Activated CD4-positive, alpha-beta T cell treated with anti-CD3 and anti-CD28 coated beads, Interleukin-2, amount 10 ng/mL, durations not matched to agents 7 days and 5 days (primary cell): ENCODE measurements at regions of chr22 and their contacts with region 1.

Region 1: DNA sequence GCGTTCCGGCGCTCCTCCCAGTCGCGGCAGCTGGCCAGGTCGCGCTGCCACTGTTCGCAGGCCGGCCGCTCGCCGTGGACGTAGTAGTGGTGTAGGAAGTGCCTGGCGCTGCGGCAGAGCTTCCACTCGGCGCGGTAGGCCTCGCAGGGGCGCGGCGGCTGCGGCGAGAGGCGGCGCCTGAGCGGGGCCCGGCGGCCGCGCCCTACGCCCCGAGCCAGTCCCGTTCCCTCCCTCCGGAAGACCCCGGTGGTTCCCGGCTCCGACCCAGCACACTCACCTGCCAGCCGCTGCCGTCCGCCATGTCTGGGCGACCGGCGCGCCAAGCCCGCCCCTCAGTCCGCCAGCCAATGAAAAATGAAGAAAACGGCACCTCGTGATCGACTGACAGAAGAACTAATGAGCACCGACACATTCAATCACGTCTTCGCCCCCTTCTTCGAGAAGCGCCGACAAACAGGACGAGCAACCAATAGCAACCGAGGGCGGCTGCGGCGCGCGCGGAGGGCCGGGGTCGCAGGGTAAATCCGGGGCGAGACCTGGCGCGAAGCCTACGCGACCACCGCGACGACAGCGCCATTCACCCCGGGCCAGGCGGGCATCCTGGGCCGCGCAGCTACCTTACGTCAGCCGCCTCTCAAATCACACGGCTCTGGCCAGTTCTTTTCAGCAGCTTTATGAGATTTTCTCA is at the start of gene C22orf39:
- DNase-seq: peak; percentile 92
- H3K4me3 Mint-ChIP-seq: peak within 1 kb of the TSS; percentile 94
- H3K27ac Mint-ChIP-seq: peak within 1 kb of the TSS; percentile 96
- H3K4me1 Mint-ChIP-seq: peaks cover 42% of the 10 kb centered on the region
- H3K27me3 Mint-ChIP-seq: no peaks in the 10 kb centered on the region
- total RNA-seq, gene C22orf39: 33.3 to 34.0 TPM

Region 2: DNA sequence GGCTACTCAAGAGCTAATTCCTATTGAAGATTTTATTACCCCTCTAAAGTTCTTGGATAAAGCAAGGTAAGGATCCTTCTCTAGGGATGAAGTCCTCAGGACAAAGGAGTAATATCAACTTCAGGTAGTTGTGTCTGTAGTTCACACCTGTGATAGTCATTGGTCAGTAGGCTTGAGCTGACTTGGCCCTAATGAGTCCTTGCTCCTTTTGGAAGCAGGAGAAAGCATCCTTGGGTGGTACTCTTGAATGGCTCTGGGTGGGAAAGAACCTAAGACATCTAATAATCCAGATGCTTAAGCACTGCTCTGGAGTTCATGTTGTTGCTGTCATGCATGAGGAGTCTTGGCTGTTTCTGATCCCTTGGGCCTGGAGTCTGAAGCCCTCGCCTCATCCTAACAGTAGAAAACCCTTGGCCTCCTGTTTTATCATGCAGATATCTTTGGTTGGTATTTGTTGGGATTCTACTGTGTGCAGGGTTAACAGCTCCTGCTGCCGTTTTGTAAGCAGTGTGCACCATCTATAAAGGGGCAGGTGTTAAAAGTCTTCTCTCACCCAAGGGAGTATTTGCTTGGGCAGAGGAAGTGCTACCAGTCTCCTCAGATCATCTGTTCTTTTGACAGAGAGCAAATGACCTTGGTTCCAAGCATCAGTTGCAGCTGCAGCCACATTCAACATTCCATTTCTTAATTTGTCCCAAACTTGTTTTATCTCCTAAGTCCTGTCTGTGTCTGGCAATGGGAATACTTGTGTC is 12.5 kb before region 1 on chr22:
- CTCF ChIA-PET with region 1: interaction called, 11 read pairs
- POLR2A ChIA-PET with region 1: interaction called, 5 read pairs
- DNase-seq: no peak
- H3K4me3 Mint-ChIP-seq: no peak overlapping the region
- H3K27ac Mint-ChIP-seq: no peak overlapping the region
- H3K4me1 Mint-ChIP-seq: peaks cover 18% of the 10 kb centered on the region
- H3K27me3 Mint-ChIP-seq: no peaks in the 10 kb centered on the region